Activated CD4-positive, alpha-beta memory T cell treated with anti-CD3 and anti-CD28 coated beads for 36 hours (primary cell): ENCODE measurements at regions of chr6 and their contacts with region 1.

Region 1: DNA sequence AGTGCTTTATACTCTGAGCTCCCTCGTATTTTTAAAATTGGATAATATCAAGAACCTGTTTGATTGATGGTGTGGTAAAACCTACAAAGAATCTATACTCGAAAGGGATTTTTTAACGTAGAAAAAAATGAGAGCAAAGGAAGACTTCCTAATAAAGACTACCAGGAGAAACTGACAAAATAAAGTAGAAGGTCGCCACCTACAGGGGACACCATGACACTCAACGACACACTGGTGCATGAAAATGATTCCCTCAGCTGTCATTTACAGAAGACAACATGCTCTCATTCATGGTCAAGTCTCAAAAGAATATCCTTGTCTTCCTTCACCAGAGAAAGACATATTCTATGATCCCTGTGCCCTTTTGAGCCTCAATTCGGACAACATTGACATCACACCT is 10.1 kb upstream of the NHSL1 start:
- DNase-seq: peak; percentile 64
- H3K4me3 Mint-ChIP-seq: no peak overlapping the region
- H3K27ac Mint-ChIP-seq: no peak overlapping the region
- H3K4me1 Mint-ChIP-seq: peaks cover 2% of the 10 kb centered on the region
- H3K27me3 Mint-ChIP-seq: peaks cover 1% of the 10 kb centered on the region

Region 2: GRCh38 chr6:138287144-138287955 is 222.0 kb before region 1 on chr6:
- CTCF ChIA-PET with region 1: interaction called, 4 read pairs
- POLR2A ChIA-PET with region 1: no interaction called
- intact Hi-C with region 1: loop called (anchors 5 kb)
- DNase-seq: peak; percentile 60
- H3K4me3 Mint-ChIP-seq: no peak overlapping the region
- H3K27ac Mint-ChIP-seq: no peak overlapping the region
- H3K4me1 Mint-ChIP-seq: peaks cover 3% of the 10 kb centered on the region
- H3K27me3 Mint-ChIP-seq: no peaks in the 10 kb centered on the region

Region 3: GRCh38 chr6:138428944-138429598 is 80.3 kb before region 1 on chr6:
- CTCF ChIA-PET with region 1: interaction called, 123 read pairs
- POLR2A ChIA-PET with region 1: no interaction called
- intact Hi-C with region 1: loop called (anchors 1 kb)
- DNase-seq: no peak
- H3K4me3 Mint-ChIP-seq: no peak overlapping the region
- H3K27ac Mint-ChIP-seq: no peak overlapping the region
- H3K4me1 Mint-ChIP-seq: no peaks in the 10 kb centered on the region
- H3K27me3 Mint-ChIP-seq: no peaks in the 10 kb centered on the region

Region 4: DNA sequence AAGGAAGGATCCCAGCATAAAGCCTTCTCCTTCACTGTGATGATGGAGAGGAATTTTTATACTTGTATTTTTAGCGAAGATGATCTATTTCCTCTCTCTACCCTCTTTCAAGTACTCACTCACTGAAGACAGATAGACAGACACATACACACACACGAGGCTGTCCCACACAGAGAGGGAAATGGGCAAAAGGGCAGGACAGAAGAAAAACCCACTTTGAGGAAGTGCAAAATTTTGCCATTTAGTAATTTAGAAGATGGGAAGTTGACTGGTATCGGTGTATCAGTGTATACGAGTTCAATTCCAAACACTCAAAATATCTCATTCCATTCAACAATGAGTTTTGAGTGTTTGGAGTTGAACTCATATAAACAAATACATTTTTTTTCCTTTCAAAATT is 74.4 kb before region 1 on chr6:
- CTCF ChIA-PET with region 1: interaction called, 123 read pairs
- POLR2A ChIA-PET with region 1: no interaction called
- intact Hi-C with region 1: no loop called
- DNase-seq: no peak
- H3K4me3 Mint-ChIP-seq: no peak overlapping the region
- H3K27ac Mint-ChIP-seq: no peak overlapping the region
- H3K4me1 Mint-ChIP-seq: no peaks in the 10 kb centered on the region
- H3K27me3 Mint-ChIP-seq: no peaks in the 10 kb centered on the region

Region 5: GRCh38 chr6:138455746-138456400 is 53.5 kb before region 1 on chr6:
- CTCF ChIA-PET with region 1: interaction called, 10 read pairs
- POLR2A ChIA-PET with region 1: no interaction called
- intact Hi-C with region 1: no loop called
- DNase-seq: peak; percentile 26
- H3K4me3 Mint-ChIP-seq: peak overlapping the region; percentile 26
- H3K27ac Mint-ChIP-seq: peak overlapping the region; percentile 67
- H3K4me1 Mint-ChIP-seq: peaks cover 26% of the 10 kb centered on the region
- H3K27me3 Mint-ChIP-seq: no peaks in the 10 kb centered on the region